ENCODE measurements at regions of chr1 and their contacts with region 1.

Region 1: DNA sequence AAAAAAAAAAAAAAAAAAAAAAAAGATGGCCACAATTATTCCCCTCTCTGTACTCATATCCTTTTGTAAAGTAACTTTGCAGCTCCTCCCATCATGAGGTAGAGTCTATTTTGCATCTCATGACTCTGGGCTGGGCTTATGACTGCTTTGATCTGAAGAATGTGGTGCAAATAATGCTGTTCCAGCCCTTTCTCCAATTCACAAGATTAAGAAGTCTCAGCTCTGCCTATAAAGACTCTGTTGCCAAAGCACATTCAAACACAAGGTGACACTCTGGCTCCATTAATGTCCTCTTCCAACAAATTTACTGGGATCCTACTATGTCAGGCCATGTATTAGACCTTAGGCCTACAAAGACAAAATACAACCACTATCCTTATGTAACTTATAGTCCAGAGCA is 64.8 kb upstream of the PTCH2 start:
- DNase-seq: no peak
- H3K4me3 ChIP-seq: no peak overlapping the region
- H3K27ac ChIP-seq: peak overlapping the region; percentile 15 to 41
- H3K4me1 ChIP-seq: peaks cover 3 to 21% of the 10 kb centered on the region in 2 donors
- H3K27me3 ChIP-seq: no peaks in the 10 kb centered on the region
- CTCF ChIP-seq: no peak

Region 2: GRCh38 chr1:44835738-44836675 is 71.9 kb before region 1 on chr1:
- intact Hi-C with region 1: loop called (anchors 5 kb)
- DNase-seq: peak in 1 of 2 donors; percentile 91
- H3K4me3 ChIP-seq: no peak overlapping the region
- H3K27ac ChIP-seq: no peak overlapping the region
- H3K4me1 ChIP-seq: no peaks in the 10 kb centered on the region
- H3K27me3 ChIP-seq: no peaks in the 10 kb centered on the region
- CTCF ChIP-seq: peak; percentile 73 to 80 (median 75)

Region 3: GRCh38 chr1:44926311-44926781 is 18.5 kb after region 1 on chr1:
- intact Hi-C with region 1: no loop called
- DNase-seq: no peak
- H3K4me3 ChIP-seq: no peak overlapping the region
- H3K27ac ChIP-seq: peak overlapping the region in 1 of 2 donors; percentile 10
- H3K4me1 ChIP-seq: peaks cover 0 to 2% of the 10 kb centered on the region in 2 donors
- H3K27me3 ChIP-seq: no peaks in the 10 kb centered on the region
- CTCF ChIP-seq: no peak

Region 4: GRCh38 chr1:44947063-44947773 is 39.3 kb after region 1 on chr1:
- intact Hi-C with region 1: no loop called
- DNase-seq: peak in 1 of 2 donors; percentile 74
- H3K4me3 ChIP-seq: peak overlapping the region; percentile 16 to 24
- H3K27ac ChIP-seq: peak overlapping the region; percentile 82 to 86
- H3K4me1 ChIP-seq: peaks cover 13 to 34% of the 10 kb centered on the region in 2 donors
- H3K27me3 ChIP-seq: no peaks in the 10 kb centered on the region
- CTCF ChIP-seq: no peak